ENCODE measurements at regions of chr1 and their contacts with region 1.

Region 1: GRCh38 chr1:45011837-45012638 is at the start of gene UROD:
- DNase-seq: peak; percentile 93 to 95
- ATAC-seq: peak; percentile 90 to 93 (median 92)
- H3K4me3 ChIP-seq: peak within 1 kb of the TSS; percentile 100
- H3K27ac ChIP-seq: peak within 1 kb of the TSS; percentile 86
- H3K4me1 ChIP-seq: peaks cover 25% of the 10 kb centered on the region
- H3K27me3 ChIP-seq: no peaks in the 10 kb centered on the region
- CTCF ChIP-seq: no peak
- total RNA-seq, gene UROD: 50.4 to 79.6 (median 66.6) TPM

Region 2: DNA sequence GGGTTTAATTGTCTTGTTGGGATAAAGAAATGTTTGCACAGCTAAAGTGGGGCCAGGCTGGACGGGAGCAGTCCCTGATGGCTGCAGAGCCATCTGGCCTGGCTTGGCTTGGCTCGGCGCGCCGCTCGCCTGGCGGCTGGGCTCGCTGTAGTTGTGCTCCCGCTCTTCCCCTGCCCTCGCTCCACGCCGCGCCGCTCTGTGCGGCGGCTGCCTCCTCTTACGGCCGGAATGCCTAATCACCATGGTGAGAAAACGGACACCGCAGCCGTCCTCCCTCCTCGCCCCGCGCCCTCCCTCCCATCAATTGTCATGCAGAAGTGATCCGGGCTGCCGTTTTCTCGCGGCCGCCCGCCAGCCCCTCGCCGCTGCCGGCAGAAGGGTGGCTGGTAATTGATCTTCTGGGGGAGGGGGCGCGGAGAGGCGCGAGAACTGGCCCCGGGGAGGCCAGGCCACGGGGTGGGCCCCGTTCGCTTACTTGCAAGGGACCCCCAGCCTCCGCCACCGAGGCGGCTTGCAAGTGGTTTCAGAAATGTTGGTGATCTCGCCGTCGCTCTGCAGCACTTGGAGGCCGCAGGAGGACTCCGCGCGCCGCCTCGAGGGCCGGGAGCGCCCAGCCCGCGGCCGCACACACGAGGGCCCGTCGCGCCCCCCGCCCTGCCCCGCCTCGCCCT is 594.6 kb before region 1 on chr1:
- intact Hi-C with region 1: no loop called
- DNase-seq: peak in 1 of 2 donors; percentile 60
- ATAC-seq: peak; percentile 54 to 82 (median 64)
- H3K4me3 ChIP-seq: peak overlapping the region; percentile 56
- H3K27ac ChIP-seq: no peak overlapping the region
- H3K4me1 ChIP-seq: peaks cover 20% of the 10 kb centered on the region
- H3K27me3 ChIP-seq: peaks cover 9 to 84% (median 21%) of the 10 kb centered on the region in 3 donors
- CTCF ChIP-seq: no peak

Region 3: GRCh38 chr1:44835738-44836675 is 176.0 kb before region 1 on chr1:
- intact Hi-C with region 1: loop called in 1 of 2 experiments (anchors 10 kb)
- DNase-seq: peak; percentile 83 to 90
- ATAC-seq: peak; percentile 79 to 89 (median 79)
- H3K4me3 ChIP-seq: no peak overlapping the region
- H3K27ac ChIP-seq: no peak overlapping the region
- H3K4me1 ChIP-seq: no peaks in the 10 kb centered on the region
- H3K27me3 ChIP-seq: no peaks in the 10 kb centered on the region
- CTCF ChIP-seq: peak; percentile 82

Region 4: GRCh38 chr1:44985747-44986359 is 26.2 kb before region 1 on chr1:
- intact Hi-C with region 1: loop called in 1 of 2 experiments (anchors 1 kb)
- DNase-seq: no peak
- ATAC-seq: peak in 1 of 4 donors; percentile 10
- H3K4me3 ChIP-seq: peak overlapping the region; percentile 89
- H3K27ac ChIP-seq: peak overlapping the region; percentile 84
- H3K4me1 ChIP-seq: peaks cover 34% of the 10 kb centered on the region
- H3K27me3 ChIP-seq: no peaks in the 10 kb centered on the region
- CTCF ChIP-seq: no peak

Region 5: GRCh38 chr1:45065083-45065482 is 53.0 kb after region 1 on chr1:
- intact Hi-C with region 1: no loop called
- DNase-seq: no peak
- ATAC-seq: no peak
- H3K4me3 ChIP-seq: no peak overlapping the region
- H3K27ac ChIP-seq: no peak overlapping the region
- H3K4me1 ChIP-seq: no peaks in the 10 kb centered on the region
- H3K27me3 ChIP-seq: no peaks in the 10 kb centered on the region
- CTCF ChIP-seq: no peak

Region 6: GRCh38 chr1:45470306-45470798 is 458.3 kb after region 1 on chr1:
- intact Hi-C with region 1: no loop called
- DNase-seq: no peak
- ATAC-seq: no peak
- H3K4me3 ChIP-seq: no peak overlapping the region
- H3K27ac ChIP-seq: no peak overlapping the region
- H3K4me1 ChIP-seq: no peaks in the 10 kb centered on the region
- H3K27me3 ChIP-seq: no peaks in the 10 kb centered on the region
- CTCF ChIP-seq: no peak

Region 7: DNA sequence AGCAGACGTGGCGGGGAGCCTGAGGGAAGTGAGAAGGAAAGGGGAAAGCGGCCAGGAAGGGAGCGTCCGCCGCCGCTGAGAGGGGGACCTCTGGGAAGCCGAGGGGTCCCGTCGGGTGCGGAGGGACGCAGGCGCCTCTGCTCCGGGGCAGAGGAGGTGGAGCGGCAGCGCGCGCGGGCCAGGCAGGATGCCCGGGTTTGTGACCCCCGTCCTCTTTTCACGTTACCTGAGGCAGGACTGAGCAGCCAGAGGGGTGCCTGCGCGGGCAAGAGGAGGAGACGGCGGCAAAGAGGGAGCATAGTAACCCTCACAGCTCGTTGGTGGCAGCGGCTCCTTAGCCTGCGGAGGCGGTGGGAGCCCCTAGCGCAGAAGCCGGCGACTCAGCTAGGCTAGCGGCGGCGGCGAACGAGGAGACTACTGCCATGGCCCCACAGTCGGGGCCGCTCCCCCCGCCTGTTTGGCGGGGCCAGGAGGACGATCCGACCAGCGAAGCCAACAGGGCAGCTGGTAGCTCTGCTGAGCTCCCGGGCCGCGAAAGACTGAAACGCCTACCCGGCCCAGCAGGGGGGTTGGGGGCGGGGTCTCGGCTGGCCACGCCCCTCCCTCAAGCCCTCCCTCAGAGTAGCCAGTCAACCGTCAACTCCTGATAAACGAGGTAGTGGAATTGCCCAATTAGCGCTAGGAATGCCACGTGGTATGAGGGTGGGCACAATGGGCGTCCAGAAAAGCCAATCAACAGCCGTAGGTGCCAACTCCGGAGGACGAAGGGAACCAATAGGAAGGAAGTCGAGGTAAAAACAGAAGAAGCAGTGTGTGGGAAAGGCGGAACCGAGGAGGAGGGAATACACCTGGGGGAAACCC is 478.8 kb after region 1 on chr1 and contains the start of gene TESK2:
- intact Hi-C with region 1: loop called (anchors 1 to 5 kb)
- DNase-seq: peak; percentile 95 to 98
- ATAC-seq: peak; percentile 96 to 97 (median 97)
- H3K4me3 ChIP-seq: peak within 1 kb of the TSS; percentile 93
- H3K27ac ChIP-seq: peak within 1 kb of the TSS; percentile 89
- H3K4me1 ChIP-seq: peaks cover 19% of the 10 kb centered on the region
- H3K27me3 ChIP-seq: no peaks in the 10 kb centered on the region
- CTCF ChIP-seq: no peak
- total RNA-seq, gene TESK2: 1.9 to 5.0 (median 2.3) TPM

Region 8: GRCh38 chr1:45569962-45570581 is 558.0 kb after region 1 on chr1:
- intact Hi-C with region 1: loop called (anchors 10 kb)
- DNase-seq: peak; percentile 57 to 78
- ATAC-seq: peak; percentile 87 to 94 (median 92)
- H3K4me3 ChIP-seq: no peak overlapping the region
- H3K27ac ChIP-seq: no peak overlapping the region
- H3K4me1 ChIP-seq: no peaks in the 10 kb centered on the region
- H3K27me3 ChIP-seq: no peaks in the 10 kb centered on the region
- CTCF ChIP-seq: peak; percentile 99

Measured in psoas muscle (tissue), 8 donors.